ENCODE measurements at regions of chr4 and their contacts with region 1.

Region 1: DNA sequence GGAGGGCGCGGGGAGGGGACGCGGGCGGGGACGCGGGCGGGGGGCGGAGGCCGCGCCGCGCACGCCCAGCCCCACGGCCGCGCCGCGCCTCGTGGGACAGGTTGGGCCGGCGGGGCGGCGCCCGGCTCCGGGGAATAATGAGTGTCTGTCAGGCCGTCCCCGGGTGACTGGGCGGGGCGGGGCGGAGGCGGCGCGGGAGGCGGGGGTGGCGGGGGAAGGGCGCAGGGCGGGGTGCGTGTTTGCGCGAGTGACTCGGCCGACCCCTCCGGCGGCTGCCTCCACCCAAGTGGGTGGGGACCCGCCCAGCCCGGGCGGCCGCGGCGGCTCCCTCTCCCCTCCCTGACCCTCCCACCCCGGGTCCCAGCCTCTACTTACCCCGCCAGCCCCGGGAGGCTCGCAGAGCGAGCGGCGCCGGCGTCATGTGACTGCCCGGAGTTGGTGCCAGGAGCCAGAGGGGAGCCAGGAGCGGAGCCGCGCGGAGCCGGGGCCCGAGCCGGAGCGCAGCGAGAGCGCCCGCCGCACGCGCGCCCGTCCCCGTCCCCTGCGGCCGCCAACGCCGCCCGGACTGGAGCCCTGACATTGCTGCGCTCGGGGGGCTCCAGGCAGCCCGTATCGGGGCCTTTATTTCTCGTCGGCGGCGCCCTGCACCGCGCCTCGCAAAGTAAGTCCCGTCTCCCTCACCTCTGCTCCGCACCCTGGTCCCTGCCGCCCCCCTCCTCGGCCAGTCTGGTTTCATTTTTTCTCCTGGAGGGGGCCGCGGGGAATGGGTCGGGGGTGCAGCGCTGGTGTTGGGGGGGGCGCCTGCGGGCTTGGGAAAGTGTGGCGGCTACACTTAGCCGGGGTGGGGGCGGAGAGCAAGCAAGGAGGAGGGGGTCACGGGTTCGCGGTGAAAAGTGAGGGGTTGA is at the start of gene KLF3:
- DNase-seq: peak; percentile 84
- total RNA-seq, gene KLF3: 9.5 and 11.6 TPM in 2 replicates

Region 2: GRCh38 chr4:38319456-38320342 is 344.4 kb before region 1 on chr4:
- in situ Hi-C with region 1: loop called (anchors 10 kb)
- DNase-seq: peak; percentile 91

Region 3: DNA sequence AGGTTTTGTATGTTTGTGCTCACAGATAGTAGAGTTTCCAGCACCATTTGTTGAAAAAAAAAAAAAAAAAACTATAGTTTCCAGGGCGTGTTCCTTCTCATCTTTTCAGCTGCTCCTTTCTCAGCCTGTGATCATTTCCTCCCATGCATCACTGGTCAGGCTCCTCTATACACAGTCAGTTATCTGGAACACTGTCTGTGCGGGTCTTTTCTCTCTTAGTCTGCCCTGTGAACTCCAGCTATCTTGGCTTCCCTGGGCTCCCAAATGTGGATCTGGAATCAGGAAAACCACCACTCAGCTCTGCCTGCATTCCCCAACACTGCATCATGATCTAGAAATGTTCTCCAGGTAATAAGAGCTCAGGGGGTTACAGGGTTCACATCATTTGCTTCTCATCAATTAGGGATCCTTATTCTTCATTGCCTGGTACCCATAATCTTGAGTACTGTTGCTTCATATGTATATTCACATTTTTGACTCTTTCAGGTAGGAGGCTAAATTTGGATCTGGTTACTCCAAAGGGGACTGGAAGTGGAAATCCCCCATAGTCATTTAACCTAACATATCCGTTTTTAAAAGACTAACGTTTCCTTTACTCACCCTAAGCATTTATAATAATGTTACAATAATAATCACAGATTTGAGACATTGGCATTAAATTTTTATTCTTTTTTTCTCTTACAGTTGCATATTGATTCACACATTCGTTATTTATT is 221.8 kb before region 1 on chr4:
- in situ Hi-C with region 1: no loop called
- DNase-seq: no peak

Measured in SK-MEL-5 (cell line).